A673 (cell line): ENCODE measurements at regions of chr3 and their contacts with region 1.

Region 1: DNA sequence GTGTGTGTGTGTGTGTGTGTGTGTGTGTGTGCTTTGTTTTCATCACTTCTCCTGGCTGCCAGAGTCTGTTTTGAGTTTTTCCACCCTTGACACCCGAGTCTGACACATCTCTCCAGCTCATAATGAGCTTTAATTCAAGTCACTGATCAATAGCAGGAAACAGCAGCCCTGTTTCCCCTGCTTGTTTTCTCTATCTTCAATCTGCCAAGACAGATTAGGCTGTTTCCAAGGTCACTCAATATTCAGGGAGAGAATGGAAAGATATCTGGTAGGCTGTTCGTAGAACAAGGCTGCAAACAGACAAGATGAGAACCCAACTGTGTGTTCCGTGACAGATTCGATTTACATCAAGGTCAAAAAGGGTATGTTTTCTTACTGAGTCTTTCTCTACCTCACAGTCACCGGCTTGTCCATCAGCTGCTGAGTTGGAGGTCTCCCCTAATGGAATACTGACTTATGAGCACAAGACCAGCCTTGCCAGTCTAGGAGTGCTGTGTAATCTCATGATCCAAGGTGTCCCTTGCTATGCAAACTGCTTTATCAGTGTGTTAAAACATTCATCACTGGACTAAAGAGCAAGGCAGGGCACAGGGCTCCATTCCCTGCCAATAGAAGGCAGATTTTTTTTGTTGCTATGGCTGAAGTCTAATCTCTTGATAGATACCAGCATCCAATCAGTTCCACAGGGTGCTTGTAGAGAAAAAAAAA is 187.9 kb upstream of the LMCD1 start:
- DNase-seq: no peak
- H3K4me3 ChIP-seq: no peak overlapping the region
- H3K27ac ChIP-seq: peak overlapping the region; percentile 96
- H3K4me1 ChIP-seq: peaks cover 56% of the 10 kb centered on the region
- H3K27me3 ChIP-seq: no peaks in the 10 kb centered on the region
- CTCF ChIP-seq: no peak

Region 2: DNA sequence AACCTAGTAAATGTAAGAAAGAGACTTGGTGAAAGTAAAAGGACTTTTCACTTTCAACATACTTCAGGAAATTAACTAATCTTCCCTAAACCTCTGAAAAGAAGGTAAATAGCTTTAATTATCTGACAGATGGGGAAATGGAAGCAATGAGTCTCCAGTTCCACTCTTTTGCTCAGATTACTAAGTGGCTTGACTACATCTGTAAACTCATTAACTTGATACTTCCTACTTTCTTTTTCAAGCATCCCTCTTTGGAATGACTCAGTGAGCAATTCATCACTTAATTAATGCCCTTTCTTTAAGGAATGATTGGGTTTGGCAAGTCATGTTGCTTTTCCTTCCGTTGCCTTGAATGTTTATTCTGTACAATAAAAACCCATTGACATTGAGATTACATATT is 1218.6 kb before region 1 on chr3:
- CTCF ChIA-PET with region 1: no interaction called
- POLR2A ChIA-PET with region 1: no interaction called
- intact Hi-C with region 1: loop called (anchors 5 kb)
- DNase-seq: peak; percentile 73
- H3K4me3 ChIP-seq: no peak overlapping the region
- H3K27ac ChIP-seq: no peak overlapping the region
- H3K4me1 ChIP-seq: no peaks in the 10 kb centered on the region
- H3K27me3 ChIP-seq: no peaks in the 10 kb centered on the region
- CTCF ChIP-seq: no peak

Region 3: GRCh38 chr3:8254489-8254888 is 59.2 kb before region 1 on chr3:
- CTCF ChIA-PET with region 1: no interaction called
- POLR2A ChIA-PET with region 1: interaction called, 4 read pairs
- intact Hi-C with region 1: loop called (anchors 1 kb)
- DNase-seq: no peak
- H3K4me3 ChIP-seq: no peak overlapping the region
- H3K27ac ChIP-seq: peak overlapping the region; percentile 96
- H3K4me1 ChIP-seq: peaks cover 53% of the 10 kb centered on the region
- H3K27me3 ChIP-seq: no peaks in the 10 kb centered on the region
- CTCF ChIP-seq: no peak

Region 4: GRCh38 chr3:8713901-8714759 is 400.4 kb after region 1 on chr3:
- CTCF ChIA-PET with region 1: no interaction called
- POLR2A ChIA-PET with region 1: no interaction called
- intact Hi-C with region 1: no loop called
- DNase-seq: peak; percentile 35
- H3K4me3 ChIP-seq: no peak overlapping the region
- H3K27ac ChIP-seq: no peak overlapping the region
- H3K4me1 ChIP-seq: no peaks in the 10 kb centered on the region
- H3K27me3 ChIP-seq: no peaks in the 10 kb centered on the region
- CTCF ChIP-seq: peak; percentile 59